AG04450 (cell line): ENCODE measurements at regions of chr2 and their contacts with region 1.

Region 1: GRCh38 chr2:182186132-182186735 is 200.6 kb downstream of the PPP1R1C start:
- DNase-seq: no peak
- H3K4me3 ChIP-seq: no peak overlapping the region
- H3K27ac ChIP-seq: no peak overlapping the region
- H3K27me3 ChIP-seq: no peaks in the 10 kb centered on the region
- CTCF ChIP-seq: peak; percentile 67

Region 2: DNA sequence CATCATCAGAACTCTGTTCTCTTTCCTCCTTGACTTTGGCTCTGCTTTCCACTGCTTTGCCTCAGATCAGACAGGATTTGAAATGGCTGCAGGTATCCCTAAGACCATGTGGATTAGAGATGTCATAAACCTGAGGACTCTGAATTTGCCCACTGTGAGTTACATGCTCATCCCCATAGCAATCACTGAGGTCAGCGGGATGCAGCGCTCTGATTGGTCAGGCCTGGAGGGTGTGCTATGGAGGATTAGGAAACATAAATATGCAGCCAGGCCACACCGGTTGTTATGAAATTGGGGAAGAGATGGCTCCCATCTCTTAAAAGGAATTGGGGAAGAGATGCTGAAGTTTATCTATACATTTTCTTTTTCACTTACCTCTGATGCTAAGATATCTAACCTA is 456.1 kb after region 1 on chr2:
- CTCF ChIA-PET with region 1: interaction called, 116 read pairs
- POLR2A ChIA-PET with region 1: no interaction called
- DNase-seq: no peak
- H3K4me3 ChIP-seq: no peak overlapping the region
- H3K27ac ChIP-seq: no peak overlapping the region
- H3K27me3 ChIP-seq: no peaks in the 10 kb centered on the region
- CTCF ChIP-seq: no peak

Region 3: DNA sequence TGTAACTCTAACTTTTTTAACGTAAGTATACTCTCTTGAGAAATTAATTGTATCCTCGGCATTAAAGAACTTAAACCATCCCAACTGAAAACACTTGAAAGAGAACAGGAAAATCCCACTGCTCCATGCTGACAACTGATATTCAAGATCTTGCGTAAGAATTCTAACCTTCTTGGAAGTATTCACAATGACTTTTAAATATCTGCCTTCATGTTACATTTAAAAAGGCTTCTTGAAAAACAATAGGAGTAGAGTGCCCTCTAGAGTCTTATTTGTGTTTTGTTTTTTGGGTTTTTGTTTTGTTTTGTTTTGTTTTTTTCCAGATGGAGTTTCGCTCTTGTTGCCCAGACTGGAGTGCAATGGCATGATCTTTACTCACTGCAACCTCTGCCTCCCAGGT is 464.5 kb after region 1 on chr2:
- CTCF ChIA-PET with region 1: interaction called, 116 read pairs
- POLR2A ChIA-PET with region 1: no interaction called
- DNase-seq: no peak
- H3K4me3 ChIP-seq: no peak overlapping the region
- H3K27ac ChIP-seq: no peak overlapping the region
- H3K27me3 ChIP-seq: no peaks in the 10 kb centered on the region
- CTCF ChIP-seq: peak; percentile 48

Region 4: DNA sequence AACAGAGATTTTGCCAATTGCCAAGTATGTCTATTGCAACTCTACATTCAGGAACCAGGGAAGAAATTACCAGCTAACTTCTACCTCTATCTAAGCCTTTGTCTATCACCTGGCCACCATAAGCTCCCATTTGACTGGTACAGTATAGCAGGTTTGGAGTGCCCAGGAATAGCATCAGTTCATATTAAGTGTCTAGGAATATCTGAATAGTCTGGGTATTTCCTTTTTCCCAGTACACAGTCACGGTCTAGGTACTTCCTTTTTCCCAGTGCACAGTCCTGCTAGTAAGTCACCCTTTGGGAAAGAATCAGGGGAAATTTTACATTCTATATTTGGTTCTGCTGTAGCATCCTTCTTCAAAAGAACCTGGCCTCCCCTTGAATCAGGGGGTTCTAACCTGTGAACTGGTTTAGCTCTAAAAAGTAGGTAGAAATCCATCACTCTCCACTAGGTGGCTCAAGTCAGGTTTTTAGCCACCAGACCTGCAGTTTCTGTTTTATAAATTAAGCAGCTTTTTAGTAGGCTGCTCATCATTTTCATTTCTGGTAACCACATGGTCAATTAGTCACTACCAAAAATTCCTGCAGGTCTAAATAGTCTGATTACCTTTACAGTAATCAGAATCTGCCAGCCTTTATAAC is 480.6 kb after region 1 on chr2:
- CTCF ChIA-PET with region 1: interaction called, 12 read pairs
- POLR2A ChIA-PET with region 1: no interaction called
- DNase-seq: no peak
- H3K4me3 ChIP-seq: no peak overlapping the region
- H3K27ac ChIP-seq: no peak overlapping the region
- H3K27me3 ChIP-seq: no peaks in the 10 kb centered on the region
- CTCF ChIP-seq: peak; percentile 64